ENCODE measurements at regions of chr6 and their contacts with region 1.

Region 1: GRCh38 chr6:95280690-95281273 is 296.6 kb upstream of the MANEA start:
- DNase-seq: peak; percentile 10
- H3K4me3 ChIP-seq: no peak overlapping the region
- H3K27ac ChIP-seq: no peak overlapping the region
- H3K4me1 ChIP-seq: no peaks in the 10 kb centered on the region
- CTCF ChIP-seq: peak; percentile 59

Region 2: DNA sequence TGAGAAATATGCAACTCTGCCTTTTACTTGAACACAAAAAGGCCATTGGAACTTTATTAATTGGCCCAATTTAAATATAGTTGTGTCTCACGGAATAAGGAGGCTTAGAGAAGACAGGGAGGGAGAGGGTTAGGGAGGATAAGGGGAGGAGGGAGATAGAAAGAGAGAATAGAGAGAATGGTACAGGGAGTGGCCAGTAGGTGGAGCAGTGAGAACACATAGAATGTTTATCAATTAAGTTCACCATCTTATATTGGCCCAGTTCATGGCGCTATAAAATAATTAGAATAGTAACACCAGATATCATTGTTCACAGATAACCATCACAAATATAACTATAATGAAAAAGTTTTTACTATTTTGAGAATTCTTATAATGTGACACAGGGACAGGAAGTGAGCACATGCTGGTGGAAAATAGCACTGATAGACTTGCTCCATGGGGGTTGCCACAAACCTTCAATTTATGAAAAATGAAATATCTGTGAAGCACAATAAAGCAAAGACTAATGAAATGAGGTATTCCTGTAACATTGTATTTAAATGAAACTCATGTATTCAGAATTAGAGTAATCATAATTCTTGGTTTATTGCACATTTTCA is 77.5 kb before region 1 on chr6:
- CTCF ChIA-PET with region 1: no interaction called
- POLR2A ChIA-PET with region 1: no interaction called
- intact Hi-C with region 1: loop called (anchors 1 kb)
- DNase-seq: peak; percentile 31
- H3K4me3 ChIP-seq: no peak overlapping the region
- H3K27ac ChIP-seq: no peak overlapping the region
- H3K4me1 ChIP-seq: no peaks in the 10 kb centered on the region
- CTCF ChIP-seq: peak; percentile 84

Region 3: GRCh38 chr6:95240514-95240913 is 40.3 kb before region 1 on chr6:
- CTCF ChIA-PET with region 1: no interaction called
- POLR2A ChIA-PET with region 1: no interaction called
- intact Hi-C with region 1: no loop called
- DNase-seq: no peak
- H3K4me3 ChIP-seq: no peak overlapping the region
- H3K27ac ChIP-seq: no peak overlapping the region
- H3K4me1 ChIP-seq: no peaks in the 10 kb centered on the region
- CTCF ChIP-seq: no peak

Region 4: GRCh38 chr6:95530176-95530819 is 249.5 kb after region 1 on chr6:
- CTCF ChIA-PET with region 1: no interaction called
- POLR2A ChIA-PET with region 1: no interaction called
- intact Hi-C with region 1: no loop called
- DNase-seq: no peak
- H3K4me3 ChIP-seq: no peak overlapping the region
- H3K27ac ChIP-seq: no peak overlapping the region
- H3K4me1 ChIP-seq: no peaks in the 10 kb centered on the region
- CTCF ChIP-seq: no peak